Endothelial cell of umbilical vein (primary cell): ENCODE measurements at regions of chr9 and their contacts with region 1.

Region 1: DNA sequence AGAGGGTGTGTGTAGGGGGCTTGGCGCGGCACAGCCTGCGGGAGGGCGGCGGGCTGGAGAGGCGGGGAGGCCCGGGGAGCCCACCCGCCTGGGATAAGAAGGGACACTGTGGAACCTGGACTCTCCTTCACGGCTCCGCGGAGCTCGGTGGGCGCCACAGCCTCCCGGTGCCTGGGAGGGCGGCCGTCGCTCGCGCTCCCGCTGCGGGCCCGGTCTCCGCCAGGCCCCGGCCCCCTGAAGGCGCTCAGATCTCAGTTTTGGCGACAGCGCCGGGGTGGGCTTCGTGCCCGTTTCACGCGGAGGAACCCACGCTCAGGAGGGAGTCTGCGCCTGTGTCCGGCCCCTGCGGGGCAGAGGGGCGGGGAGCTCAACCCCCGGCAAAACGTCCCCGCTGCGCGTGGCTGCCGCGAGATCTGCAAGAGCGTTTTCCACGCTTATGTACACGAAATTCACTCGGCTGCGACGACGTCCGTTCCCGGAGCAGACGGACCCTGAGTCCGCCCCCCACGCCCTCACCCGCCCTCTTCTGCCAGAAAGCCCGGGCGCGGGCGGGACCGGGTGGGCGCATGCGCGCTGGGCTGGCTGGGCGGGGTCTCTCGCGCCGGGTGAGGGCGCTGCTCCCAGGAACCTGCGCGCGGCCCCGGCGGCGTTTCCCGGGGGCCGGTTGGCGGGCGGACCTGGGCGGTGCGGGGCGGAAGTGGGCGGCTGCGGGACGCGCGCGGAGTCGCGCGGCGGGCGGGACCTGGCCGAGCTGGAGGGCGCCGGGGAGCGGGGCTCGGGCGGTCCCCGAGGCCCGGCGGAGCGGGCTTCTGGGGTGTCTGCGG is at the start of gene NELFB:
- DNase-seq: peak; percentile 75
- H3K4me3 ChIP-seq: peak within 1 kb of the TSS; percentile 41 to 94 (median 41)
- H3K27ac ChIP-seq: no peak within 1 kb of the TSS
- H3K4me1 ChIP-seq: peaks cover 14% of the 10 kb centered on the region
- H3K27me3 ChIP-seq: no peaks in the 10 kb centered on the region
- CTCF ChIP-seq: no peak
- POLR2A ChIP-seq: peak; percentile 85
- total RNA-seq, gene NELFB: 70.2 and 76.1 TPM in 2 replicates

Region 2: GRCh38 chr9:137269231-137269772 is 14.5 kb after region 1 on chr9:
- CTCF ChIA-PET with region 1: interaction called, 3 read pairs
- POLR2A ChIA-PET with region 1: no interaction called
- dilution Hi-C with region 1: no loop called
- intact Hi-C with region 1: loop called (anchors 2 kb)
- DNase-seq: peak; percentile 46
- H3K4me3 ChIP-seq: no peak overlapping the region
- H3K27ac ChIP-seq: peak overlapping the region; percentile 47
- H3K4me1 ChIP-seq: peaks cover 22% of the 10 kb centered on the region
- H3K27me3 ChIP-seq: no peaks in the 10 kb centered on the region
- CTCF ChIP-seq: no peak
- POLR2A ChIP-seq: no peak

Region 3: DNA sequence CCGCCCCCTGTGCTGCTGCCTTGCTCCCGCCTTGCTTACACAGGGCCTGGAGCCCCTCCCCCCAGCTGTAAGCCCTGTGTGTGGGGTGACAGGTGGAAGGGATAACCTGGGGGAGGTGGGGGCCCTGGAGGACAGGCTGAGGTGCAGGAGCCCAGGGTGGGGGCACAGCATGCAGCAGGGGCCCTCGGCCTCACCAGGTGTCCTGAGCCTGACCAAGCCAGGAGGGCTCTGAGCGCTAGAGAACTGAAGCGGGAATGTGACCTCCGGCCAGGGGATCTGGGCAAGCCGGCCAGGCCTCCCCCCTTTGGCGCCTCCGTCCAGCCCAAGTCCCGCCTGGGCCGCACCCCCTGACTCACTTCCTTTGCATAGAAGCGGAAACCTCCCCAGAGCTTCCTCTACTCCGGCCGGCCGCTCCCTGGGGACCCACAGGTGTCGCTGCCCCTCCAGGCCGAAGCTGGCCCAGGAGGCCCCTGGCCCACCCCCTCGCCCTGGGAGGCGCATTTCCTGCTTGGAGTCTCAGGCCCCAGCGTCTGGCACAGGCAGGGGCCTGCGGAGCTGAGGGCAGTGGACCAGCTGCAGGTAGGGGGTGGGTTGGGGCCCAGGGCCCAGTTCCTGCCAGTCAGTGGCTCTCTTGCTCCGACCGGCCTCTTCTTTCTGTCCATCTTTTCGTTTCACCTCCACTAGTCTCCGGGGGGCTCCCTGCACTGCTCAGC is 22.6 kb after region 1 on chr9 and contains the start of gene TOR4A:
- CTCF ChIA-PET with region 1: interaction called, 6 read pairs
- POLR2A ChIA-PET with region 1: interaction called, 3 read pairs
- dilution Hi-C with region 1: no loop called
- intact Hi-C with region 1: loop called (anchors 1 kb)
- DNase-seq: peak; percentile 93
- H3K4me3 ChIP-seq: peak within 1 kb of the TSS; percentile 39 to 60 (median 51)
- H3K27ac ChIP-seq: peak within 1 kb of the TSS; percentile 91
- H3K4me1 ChIP-seq: peaks cover 25% of the 10 kb centered on the region
- H3K27me3 ChIP-seq: no peaks in the 10 kb centered on the region
- CTCF ChIP-seq: peak; percentile 29 to 39
- POLR2A ChIP-seq: peak; percentile 95
- total RNA-seq, gene TOR4A: 46.4 and 48.0 TPM in 2 replicates